ENCODE measurements at regions of chr19 and their contacts with region 1.

Region 1: GRCh38 chr19:46392243-46392801 is 21.0 kb downstream of the CCDC8 start:
- DNase-seq: no peak
- ATAC-seq: no peak
- H3K4me3 ChIP-seq: no peak overlapping the region
- H3K27ac ChIP-seq: no peak overlapping the region
- H3K4me1 ChIP-seq: no peaks in the 10 kb centered on the region
- H3K27me3 ChIP-seq: no peaks in the 10 kb centered on the region
- CTCF ChIP-seq: no peak
- EP300 ChIP-seq: no peak
- POLR2A ChIP-seq: no peak
- RAD21 ChIP-seq: no peak

Region 2: GRCh38 chr19:46288896-46289588 is 103.3 kb before region 1 on chr19:
- CTCF ChIA-PET with region 1: no interaction called
- POLR2A ChIA-PET with region 1: no interaction called
- RAD21 ChIA-PET with region 1: no interaction called
- SMC1A ChIA-PET with region 1: no interaction called
- in situ Hi-C with region 1: no loop called
- intact Hi-C with region 1: loop called (anchors 10 kb)
- DNase-seq: no peak
- ATAC-seq: no peak
- H3K4me3 ChIP-seq: no peak overlapping the region
- H3K27ac ChIP-seq: no peak overlapping the region
- H3K4me1 ChIP-seq: no peaks in the 10 kb centered on the region
- H3K27me3 ChIP-seq: no peaks in the 10 kb centered on the region
- CTCF ChIP-seq: no peak
- EP300 ChIP-seq: no peak
- POLR2A ChIP-seq: no peak
- RAD21 ChIP-seq: no peak

Region 3: DNA sequence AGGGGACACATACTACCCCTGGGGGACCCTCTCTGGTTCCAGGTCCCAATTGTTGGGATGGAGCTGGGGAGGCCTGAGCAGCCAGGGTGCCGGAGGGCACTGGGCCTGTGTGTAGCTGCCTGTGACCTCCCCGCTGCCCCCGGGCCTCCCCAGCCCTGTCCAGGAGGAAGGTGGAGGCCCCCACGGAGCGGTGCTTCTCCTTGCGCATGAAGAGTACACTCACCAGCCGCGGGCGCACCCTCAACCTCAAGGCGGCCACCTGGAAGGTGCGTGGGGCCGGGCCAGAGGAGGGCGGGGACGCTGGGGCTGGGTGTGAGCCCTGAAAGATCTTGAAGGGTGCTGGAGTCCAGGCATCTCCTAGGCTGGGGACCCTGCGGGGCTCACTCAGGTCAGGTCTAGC is 83.8 kb before region 1 on chr19:
- CTCF ChIA-PET with region 1: no interaction called
- POLR2A ChIA-PET with region 1: no interaction called
- RAD21 ChIA-PET with region 1: no interaction called
- SMC1A ChIA-PET with region 1: no interaction called
- in situ Hi-C with region 1: no loop called
- intact Hi-C with region 1: no loop called
- DNase-seq: no peak
- ATAC-seq: no peak
- H3K4me3 ChIP-seq: no peak overlapping the region
- H3K27ac ChIP-seq: no peak overlapping the region
- H3K4me1 ChIP-seq: no peaks in the 10 kb centered on the region
- H3K27me3 ChIP-seq: no peaks in the 10 kb centered on the region; a peak in 1 of 4 replicates
- CTCF ChIP-seq: no peak
- EP300 ChIP-seq: no peak
- POLR2A ChIP-seq: no peak
- RAD21 ChIP-seq: no peak

Region 4: DNA sequence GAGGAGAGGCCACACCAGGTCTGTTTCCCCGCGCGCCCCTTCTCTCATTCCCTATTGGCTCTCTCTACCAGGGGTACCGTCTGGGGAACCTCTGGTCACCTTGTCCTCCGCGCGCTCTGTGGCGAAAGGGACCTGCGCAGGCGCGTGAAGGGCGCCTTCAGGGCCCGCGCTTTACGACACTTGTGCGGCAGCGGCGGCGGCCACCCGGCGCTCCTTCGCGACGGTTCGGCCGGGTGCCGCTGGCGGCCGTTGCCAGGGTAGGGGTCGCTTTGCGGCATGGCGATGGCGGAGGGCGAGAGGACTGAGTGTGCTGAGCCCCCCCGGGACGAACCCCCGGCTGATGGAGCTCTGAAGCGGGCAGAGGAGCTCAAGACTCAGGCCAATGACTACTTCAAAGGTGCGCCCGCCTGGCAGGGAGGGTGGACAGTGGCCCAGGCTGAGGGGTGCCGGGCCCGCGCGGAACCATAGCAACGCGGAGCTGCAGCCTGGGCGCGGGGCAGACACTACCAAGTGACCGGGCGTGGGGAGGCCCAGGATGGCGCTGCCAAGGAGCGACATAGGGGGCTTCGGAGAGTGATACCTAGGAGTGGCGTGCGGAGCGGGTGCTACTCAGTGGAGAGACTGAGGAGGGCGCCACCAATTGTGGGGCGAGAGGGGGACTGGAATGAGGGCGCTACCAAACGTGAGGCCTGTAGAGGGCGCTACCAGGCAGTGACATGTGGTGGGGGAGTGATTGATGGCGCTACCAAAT is 45.3 kb before region 1 on chr19 and contains the start of gene PPP5C:
- CTCF ChIA-PET with region 1: interaction called, 20 read pairs
- POLR2A ChIA-PET with region 1: interaction called, 3 read pairs
- RAD21 ChIA-PET with region 1: interaction called, 4 read pairs
- SMC1A ChIA-PET with region 1: interaction called, 4 read pairs
- in situ Hi-C with region 1: no loop called
- intact Hi-C with region 1: no loop called
- DNase-seq: peak; percentile 66
- ATAC-seq: peak; percentile 73
- H3K4me3 ChIP-seq: peak within 1 kb of the TSS; percentile 76
- H3K27ac ChIP-seq: peak within 1 kb of the TSS; percentile 91
- H3K4me1 ChIP-seq: peaks cover 39% of the 10 kb centered on the region
- H3K27me3 ChIP-seq: no peaks in the 10 kb centered on the region
- CTCF ChIP-seq: peak; percentile 90 to 99 (median 98); a peak in 5 of 6 replicates
- EP300 ChIP-seq: no peak
- POLR2A ChIP-seq: peak; percentile 84
- RAD21 ChIP-seq: peak; percentile 61
- polyA plus RNA-seq, gene PPP5C: 1.1 to 2.0 TPM

Region 5: GRCh38 chr19:46426506-46427162 is 34.3 kb after region 1 on chr19:
- CTCF ChIA-PET with region 1: no interaction called
- POLR2A ChIA-PET with region 1: no interaction called
- RAD21 ChIA-PET with region 1: no interaction called
- SMC1A ChIA-PET with region 1: no interaction called
- in situ Hi-C with region 1: no loop called
- intact Hi-C with region 1: no loop called
- DNase-seq: no peak
- ATAC-seq: peak; percentile 57
- H3K4me3 ChIP-seq: peak overlapping the region; percentile 62; the same call in 1 of the 2 replicates
- H3K27ac ChIP-seq: no peak overlapping the region
- H3K4me1 ChIP-seq: no peaks in the 10 kb centered on the region
- H3K27me3 ChIP-seq: peaks cover 0 to 5% of the 10 kb centered on the region in 2 experiments; a peak in 2 of 4 replicates
- CTCF ChIP-seq: no peak
- EP300 ChIP-seq: no peak
- POLR2A ChIP-seq: no peak
- RAD21 ChIP-seq: no peak

Region 6: DNA sequence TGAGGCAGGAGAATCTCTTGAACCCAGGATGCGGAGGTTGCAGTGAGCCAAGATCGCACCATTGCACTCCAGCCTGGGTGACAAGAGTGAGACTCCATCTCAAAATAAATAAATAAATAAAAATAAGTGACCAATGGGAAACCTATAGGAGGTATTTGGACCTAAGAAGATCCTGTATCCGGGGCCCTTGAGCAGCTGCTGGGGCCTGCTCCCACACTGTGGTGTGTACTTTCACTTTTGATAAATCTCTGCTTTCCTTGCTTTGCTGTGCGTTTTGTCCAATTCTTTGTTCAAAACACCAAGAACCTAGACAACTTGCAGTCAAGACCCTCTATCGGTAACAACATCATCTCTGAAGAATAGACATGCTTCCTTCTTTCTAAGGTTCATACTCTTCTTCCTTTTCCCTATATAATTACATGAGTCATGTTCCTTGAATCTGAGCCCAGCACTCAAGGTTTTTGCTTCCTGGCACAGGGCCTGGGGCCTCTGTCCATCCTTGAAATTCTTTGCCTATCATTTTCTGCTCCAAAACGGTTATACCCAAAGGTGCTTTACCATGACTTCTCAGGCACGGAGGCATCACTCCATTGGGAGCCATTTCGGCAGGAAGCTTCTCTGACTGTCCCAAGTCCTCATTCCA is 50.6 kb after region 1 on chr19:
- CTCF ChIA-PET with region 1: no interaction called
- POLR2A ChIA-PET with region 1: no interaction called
- RAD21 ChIA-PET with region 1: no interaction called
- SMC1A ChIA-PET with region 1: no interaction called
- in situ Hi-C with region 1: no loop called
- intact Hi-C with region 1: no loop called
- DNase-seq: no peak
- ATAC-seq: no peak
- H3K4me3 ChIP-seq: no peak overlapping the region
- H3K27ac ChIP-seq: no peak overlapping the region
- H3K4me1 ChIP-seq: no peaks in the 10 kb centered on the region
- H3K27me3 ChIP-seq: no peaks in the 10 kb centered on the region
- CTCF ChIP-seq: no peak
- EP300 ChIP-seq: no peak
- POLR2A ChIP-seq: no peak
- RAD21 ChIP-seq: no peak

Region 7: GRCh38 chr19:46487802-46488445 is 95.6 kb after region 1 on chr19:
- CTCF ChIA-PET with region 1: interaction called, 7 read pairs
- POLR2A ChIA-PET with region 1: no interaction called
- RAD21 ChIA-PET with region 1: interaction called, 4 read pairs
- SMC1A ChIA-PET with region 1: interaction called, 9 read pairs
- in situ Hi-C with region 1: no loop called
- intact Hi-C with region 1: loop called (anchors 2 kb)
- DNase-seq: no peak
- ATAC-seq: peak; percentile 94
- H3K4me3 ChIP-seq: no peak overlapping the region
- H3K27ac ChIP-seq: no peak overlapping the region
- H3K4me1 ChIP-seq: no peaks in the 10 kb centered on the region
- H3K27me3 ChIP-seq: peaks cover 10 to 23% of the 10 kb centered on the region in 2 experiments; a peak in 3 of 4 replicates
- CTCF ChIP-seq: peak; percentile 89 to 94 (median 91)
- EP300 ChIP-seq: no peak
- POLR2A ChIP-seq: no peak
- RAD21 ChIP-seq: peak; percentile 97

Region 8: DNA sequence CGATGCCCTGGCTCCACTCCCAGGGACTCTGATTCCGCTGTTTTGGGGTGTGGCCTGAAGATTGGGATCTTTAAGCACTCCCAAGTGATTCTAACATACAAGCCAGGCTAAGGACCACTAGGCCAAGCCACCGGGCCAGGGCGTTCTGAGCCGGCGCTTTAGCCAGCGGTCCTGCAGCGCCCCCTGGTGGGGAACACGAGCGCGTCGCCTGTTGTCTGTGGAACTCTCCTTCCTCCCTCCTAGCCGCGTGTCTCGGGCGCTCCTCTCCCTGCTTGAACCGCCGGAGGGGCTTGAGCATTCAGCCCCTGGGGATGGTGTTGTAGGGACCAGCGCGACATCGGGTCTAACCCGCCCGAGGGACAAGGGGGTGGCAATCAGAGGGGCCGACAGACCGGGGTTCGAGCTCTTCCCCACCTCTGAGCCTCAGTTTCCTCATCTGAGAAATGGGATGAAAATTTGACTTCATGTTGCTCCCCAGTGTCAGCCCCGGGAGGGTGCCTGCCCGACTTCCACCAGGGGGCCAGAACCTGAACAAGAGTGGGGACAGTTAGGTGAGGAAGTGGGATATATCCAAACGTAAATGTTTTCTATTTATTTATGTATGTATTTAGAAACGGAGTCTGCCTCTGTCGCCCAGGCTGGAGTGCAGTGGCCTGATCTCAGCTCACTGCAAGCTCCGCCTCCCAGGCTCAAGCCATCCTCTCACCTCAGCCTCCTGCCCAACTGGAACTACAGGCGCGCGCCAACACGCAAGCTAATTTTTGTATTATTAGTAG is 121.3 kb after region 1 on chr19:
- CTCF ChIA-PET with region 1: interaction called, 18 read pairs
- POLR2A ChIA-PET with region 1: no interaction called
- RAD21 ChIA-PET with region 1: no interaction called
- SMC1A ChIA-PET with region 1: interaction called, 4 read pairs
- in situ Hi-C with region 1: no loop called
- intact Hi-C with region 1: loop called (anchors 1 kb)
- DNase-seq: no peak
- ATAC-seq: peak; percentile 95
- H3K4me3 ChIP-seq: no peak overlapping the region
- H3K27ac ChIP-seq: no peak overlapping the region
- H3K4me1 ChIP-seq: no peaks in the 10 kb centered on the region
- H3K27me3 ChIP-seq: no peaks in the 10 kb centered on the region; a peak in 1 of 4 replicates
- CTCF ChIP-seq: peak; percentile 86 to 95 (median 86)
- EP300 ChIP-seq: no peak
- POLR2A ChIP-seq: no peak
- RAD21 ChIP-seq: peak; percentile 73

Region 9: DNA sequence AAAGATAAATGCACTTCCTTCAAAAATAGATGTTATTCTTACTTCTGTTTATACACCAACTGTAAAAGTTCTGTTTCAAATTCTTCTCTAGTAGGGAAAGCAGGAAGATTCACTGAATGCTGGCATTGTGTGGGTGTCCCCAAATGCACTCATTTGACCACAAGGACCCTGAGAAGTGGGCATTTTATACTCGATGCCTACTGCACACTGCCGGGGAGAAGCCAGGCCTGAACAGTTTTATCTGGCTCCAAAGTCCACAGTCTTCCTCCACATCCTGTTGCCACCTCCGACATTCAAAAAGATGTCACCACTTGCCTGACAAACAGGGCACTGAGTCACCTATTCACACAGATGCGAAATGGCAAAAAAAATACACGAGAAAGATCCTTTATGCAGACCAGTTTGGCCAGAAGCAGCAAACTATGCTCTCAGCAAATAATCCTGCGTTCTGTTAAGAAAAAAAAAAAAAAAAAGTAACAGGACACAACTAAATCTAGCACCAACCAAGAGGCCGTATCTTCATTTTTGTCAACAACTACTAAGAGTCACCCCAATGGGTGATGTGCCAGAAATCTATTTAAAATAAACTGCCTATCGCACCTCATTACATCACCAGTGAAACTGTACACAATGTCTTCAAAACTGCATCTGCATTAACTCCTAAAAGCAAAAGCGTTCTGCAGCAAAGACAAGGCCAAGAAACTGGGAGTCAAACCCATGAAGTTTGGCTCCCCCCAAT is 715.0 kb after region 1 on chr19:
- CTCF ChIA-PET with region 1: no interaction called
- POLR2A ChIA-PET with region 1: interaction called, 11 read pairs
- RAD21 ChIA-PET with region 1: no interaction called
- SMC1A ChIA-PET with region 1: no interaction called
- in situ Hi-C with region 1: no loop called
- intact Hi-C with region 1: no loop called
- DNase-seq: no peak
- ATAC-seq: no peak
- H3K4me3 ChIP-seq: peak overlapping the region; percentile 98; the same call in 1 of the 2 replicates
- H3K27ac ChIP-seq: peak overlapping the region; percentile 34; the same call in 1 of the 2 replicates
- H3K4me1 ChIP-seq: peaks cover 8% of the 10 kb centered on the region
- H3K27me3 ChIP-seq: no peaks in the 10 kb centered on the region
- CTCF ChIP-seq: no peak
- EP300 ChIP-seq: no peak
- POLR2A ChIP-seq: no peak
- RAD21 ChIP-seq: no peak